PC-9 (cell line): ENCODE measurements at regions of chr4 and their contacts with region 1.

Region 1: DNA sequence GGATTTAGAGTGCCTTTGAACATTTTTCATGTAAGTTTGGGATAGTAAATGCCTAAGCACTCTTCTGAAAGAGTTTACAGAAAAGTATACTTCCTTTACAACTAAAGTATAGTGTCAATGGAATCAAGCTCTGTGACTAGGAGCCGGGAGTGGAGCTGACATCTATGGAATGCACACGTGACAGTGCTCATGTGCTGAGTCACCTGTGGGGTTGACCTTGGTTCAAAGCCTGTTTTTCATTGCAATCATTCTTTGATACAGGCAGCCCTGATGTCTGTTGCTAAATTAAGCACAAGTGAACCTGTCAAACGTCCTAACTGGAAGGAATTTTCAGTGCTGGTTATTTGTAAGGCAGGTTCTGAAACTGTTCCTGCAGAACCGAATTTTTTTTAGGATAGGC is 82.5 kb downstream of the GPAT3 start:
- DNase-seq: peak; percentile 50 to 86
- H3K4me3 ChIP-seq: no peak overlapping the region
- H3K27ac ChIP-seq: peak overlapping the region; percentile 80
- H3K4me1 ChIP-seq: peaks cover 30% of the 10 kb centered on the region
- H3K27me3 ChIP-seq: no peaks in the 10 kb centered on the region
- CTCF ChIP-seq: no peak

Region 2: GRCh38 chr4:83535520-83536361 is 82.7 kb before region 1 on chr4 and contains the start of gene GPAT3:
- CTCF ChIA-PET with region 1: no interaction called
- POLR2A ChIA-PET with region 1: no interaction called
- intact Hi-C with region 1: loop called (anchors 5 kb)
- DNase-seq: peak; percentile 80 to 82
- H3K4me3 ChIP-seq: peak within 1 kb of the TSS; percentile 94
- H3K27ac ChIP-seq: peak within 1 kb of the TSS; percentile 92
- H3K4me1 ChIP-seq: peaks cover 30% of the 10 kb centered on the region
- H3K27me3 ChIP-seq: no peaks in the 10 kb centered on the region
- CTCF ChIP-seq: no peak
- total RNA-seq, gene GPAT3: 27.0 and 29.1 TPM in 2 replicates

Region 3: DNA sequence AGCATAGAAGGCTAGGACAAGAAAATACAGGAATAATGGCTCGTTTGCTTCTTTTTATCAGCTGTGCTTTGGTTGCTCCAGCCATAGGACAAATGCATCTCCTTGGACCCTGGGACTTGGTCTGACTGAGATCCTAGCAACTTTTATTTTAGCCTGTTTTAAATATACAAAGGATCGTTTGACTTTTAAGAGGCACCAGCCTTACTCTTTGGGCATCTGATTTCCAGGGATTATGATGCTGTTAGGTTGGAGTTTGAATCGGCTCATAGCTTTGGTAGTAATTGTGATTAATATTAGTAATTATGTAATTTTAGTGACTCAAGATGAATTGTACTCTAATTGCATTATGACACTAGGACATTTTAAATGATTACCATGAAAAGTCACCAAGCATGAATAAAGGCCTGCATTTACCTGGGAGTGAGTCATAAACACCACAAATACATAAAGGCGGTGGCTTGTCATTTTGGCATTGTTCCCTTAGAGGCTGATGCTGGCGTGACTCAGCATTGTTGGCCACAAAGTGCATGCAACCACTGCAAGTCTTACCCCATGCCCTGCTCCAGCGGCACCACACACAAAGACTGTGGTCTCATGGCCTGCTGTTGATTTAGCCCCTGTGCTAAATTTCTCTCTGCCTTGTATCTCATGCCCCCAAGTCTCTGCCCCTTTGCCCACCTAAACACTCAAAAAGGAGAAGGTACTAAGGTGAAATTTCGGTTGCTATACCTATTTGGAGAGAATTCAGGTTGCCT is 70.1 kb before region 1 on chr4:
- CTCF ChIA-PET with region 1: no interaction called
- POLR2A ChIA-PET with region 1: no interaction called
- intact Hi-C with region 1: loop called (anchors 1 kb)
- DNase-seq: peak; percentile 79 to 94
- H3K4me3 ChIP-seq: peak overlapping the region; percentile 21; the same call in 1 of the 2 replicates
- H3K27ac ChIP-seq: peak overlapping the region; percentile 100
- H3K4me1 ChIP-seq: peaks cover 61% of the 10 kb centered on the region
- H3K27me3 ChIP-seq: no peaks in the 10 kb centered on the region
- CTCF ChIP-seq: no peak

Region 4: GRCh38 chr4:83569987-83570386 is 48.4 kb before region 1 on chr4:
- CTCF ChIA-PET with region 1: no interaction called
- POLR2A ChIA-PET with region 1: no interaction called
- intact Hi-C with region 1: loop called (anchors 1 kb)
- DNase-seq: peak; percentile 65 to 97
- H3K4me3 ChIP-seq: peak overlapping the region; percentile 44; the same call in 1 of the 2 replicates
- H3K27ac ChIP-seq: peak overlapping the region; percentile 97
- H3K4me1 ChIP-seq: peaks cover 40% of the 10 kb centered on the region
- H3K27me3 ChIP-seq: no peaks in the 10 kb centered on the region
- CTCF ChIP-seq: no peak